Activated T-helper 1 cell treated with anti-CD3 and anti-CD28 coated beads, Interleukin-12 subunit alpha, Interleukin-12 subunit beta, Interleukin-2, Interleukin-4 antibody, amounts not matched to agents 30 ng/mL and 10 ng/mL and 1 ng/mL, durations not matched to agents 14 hours and 24 hours and 36 hours (primary cell): ENCODE measurements at regions of chr7 and their contacts with region 1.

Region 1: DNA sequence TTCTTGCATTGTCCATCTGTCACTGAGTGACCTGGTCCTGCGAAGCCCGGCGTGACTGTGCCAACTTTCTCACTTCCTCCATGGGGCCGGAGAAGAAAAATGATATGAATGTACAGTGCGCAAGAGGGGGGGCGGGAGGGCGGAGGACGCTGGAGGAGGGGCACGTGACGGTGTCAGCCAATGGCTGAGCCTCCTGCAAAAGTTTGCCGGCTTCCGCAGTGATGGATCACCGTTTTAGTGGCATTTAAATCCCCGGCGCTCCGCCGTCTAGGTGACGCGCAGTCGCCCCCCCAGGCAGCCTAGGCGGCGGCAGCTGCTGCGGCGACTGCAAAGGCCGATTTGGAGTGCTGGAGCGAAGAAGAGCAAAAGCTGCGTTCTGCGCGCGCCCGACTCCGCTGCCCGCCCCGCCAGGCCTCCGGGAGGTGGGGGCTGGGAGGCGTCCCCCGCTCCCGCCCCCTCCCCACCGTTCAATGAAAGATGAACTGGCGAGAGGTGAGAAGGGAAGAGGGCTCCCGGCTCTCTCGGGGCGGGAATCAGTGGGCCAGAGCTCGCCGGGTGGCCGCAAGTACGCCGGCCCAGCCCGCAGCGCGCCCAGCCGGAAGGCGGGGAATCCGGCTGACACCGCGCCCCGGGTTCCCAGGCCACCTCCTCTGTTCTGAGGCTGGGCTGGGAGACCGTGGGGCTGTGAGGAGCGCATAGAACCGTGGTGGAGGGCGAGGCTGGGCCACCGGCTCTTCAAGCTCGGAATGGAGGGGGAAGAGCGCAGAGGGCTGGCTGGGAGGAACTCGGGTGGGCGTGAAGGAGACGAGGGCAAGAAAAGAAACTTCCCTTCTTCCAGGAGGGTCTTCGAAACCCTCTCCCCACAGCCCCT is at the start of gene HOXA1:
- DNase-seq: peak; percentile 48
- H3K4me3 Mint-ChIP-seq: peak within 1 kb of the TSS; percentile 85
- H3K27ac Mint-ChIP-seq: peak within 1 kb of the TSS; percentile 73
- H3K4me1 Mint-ChIP-seq: peaks cover 18% of the 10 kb centered on the region
- H3K27me3 Mint-ChIP-seq: peaks cover 76% of the 10 kb centered on the region
- total RNA-seq, gene HOXA1: 0.16 and 0.24 TPM in 2 replicates

Region 2: DNA sequence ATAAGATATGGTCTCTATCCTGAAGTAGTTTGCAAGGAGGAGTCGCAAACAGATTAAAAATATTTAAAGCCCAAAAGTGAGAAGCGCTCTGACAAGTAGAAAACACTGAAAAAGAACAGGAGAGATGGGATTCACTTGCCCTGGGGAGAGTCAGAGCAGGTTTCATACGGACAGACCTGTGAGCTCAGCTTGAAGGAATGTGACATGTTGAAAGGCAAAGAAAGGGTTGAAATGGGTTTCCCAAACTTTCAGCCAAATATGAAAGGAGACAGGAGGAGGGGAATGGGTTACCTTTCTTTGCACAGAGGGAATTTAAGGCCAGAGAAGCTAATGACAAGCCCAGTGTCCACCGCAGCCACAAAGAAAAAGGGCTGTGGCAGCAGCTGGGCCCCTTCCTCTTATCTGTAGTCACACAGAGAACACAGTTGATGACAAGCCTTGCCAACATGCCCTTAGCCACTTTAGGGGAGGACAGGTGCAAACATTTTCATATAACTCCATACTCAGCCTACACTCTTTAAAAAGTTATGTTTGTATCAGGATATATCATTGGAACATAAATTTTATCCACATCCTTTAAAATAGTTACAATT is 15.2 kb before region 1 on chr7:
- intact Hi-C with region 1: no loop called
- DNase-seq: no peak
- H3K4me3 Mint-ChIP-seq: no peak overlapping the region
- H3K27ac Mint-ChIP-seq: no peak overlapping the region
- H3K4me1 Mint-ChIP-seq: peaks cover 7% of the 10 kb centered on the region
- H3K27me3 Mint-ChIP-seq: peaks cover 8% of the 10 kb centered on the region

Region 3: DNA sequence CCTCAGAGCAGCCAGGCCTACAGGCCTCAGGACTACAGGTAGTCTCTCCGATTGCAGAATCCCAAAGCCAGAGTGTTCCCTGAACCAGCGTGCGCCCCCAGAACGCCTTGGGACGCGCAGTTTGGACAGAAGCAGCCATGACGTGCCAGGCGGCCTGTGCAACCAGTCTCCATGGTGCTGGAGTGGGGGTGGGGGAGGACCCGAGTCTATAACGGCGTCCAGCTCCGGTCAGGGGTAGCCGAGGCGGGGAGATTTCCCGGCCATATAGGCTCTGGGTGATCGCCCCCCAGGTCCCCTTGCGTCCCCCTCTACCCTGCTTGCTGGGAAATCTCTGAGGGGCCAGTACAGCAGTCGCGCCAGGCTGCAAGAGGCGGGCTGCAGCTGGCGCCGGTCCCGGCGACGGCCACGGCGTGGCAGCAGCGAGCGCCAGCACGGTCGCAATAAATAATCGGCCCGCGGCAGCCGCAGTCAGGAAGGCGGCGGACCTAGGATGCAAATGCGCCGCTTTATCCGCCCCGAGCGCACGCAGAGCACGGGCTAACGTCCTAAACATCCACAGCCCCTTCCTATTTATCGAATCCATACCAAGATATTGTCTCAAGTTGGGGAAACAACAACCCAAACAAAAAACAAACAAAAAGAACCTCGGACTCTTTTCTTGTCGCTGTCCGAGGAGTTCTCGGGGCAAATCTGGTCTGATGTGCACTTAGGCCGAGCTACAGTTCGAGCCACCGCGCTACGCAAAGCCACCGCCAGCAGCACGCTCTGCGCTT is 54.6 kb after region 1 on chr7:
- intact Hi-C with region 1: loop called (anchors 5 kb)
- DNase-seq: peak; percentile 46
- H3K4me3 Mint-ChIP-seq: peak overlapping the region; percentile 57
- H3K27ac Mint-ChIP-seq: peak overlapping the region; percentile 7
- H3K4me1 Mint-ChIP-seq: peaks cover 18% of the 10 kb centered on the region
- H3K27me3 Mint-ChIP-seq: peaks cover 88% of the 10 kb centered on the region

Region 4: GRCh38 chr7:27346531-27347270 is 250.6 kb after region 1 on chr7:
- intact Hi-C with region 1: no loop called
- DNase-seq: no peak
- H3K4me3 Mint-ChIP-seq: no peak overlapping the region
- H3K27ac Mint-ChIP-seq: no peak overlapping the region
- H3K4me1 Mint-ChIP-seq: no peaks in the 10 kb centered on the region
- H3K27me3 Mint-ChIP-seq: peaks cover 5% of the 10 kb centered on the region